Heart left ventricle (tissue), 16 donors: ENCODE measurements at regions of chr2 and their contacts with region 1.

Region 1: GRCh38 chr2:134261398-134262131 is 7.7 kb downstream of the MGAT5 start:
- DNase-seq: no peak
- ATAC-seq: peak in 3 of 4 donors; percentile 43 to 59 (median 52)
- H3K4me3 ChIP-seq: no peak overlapping the region
- H3K27ac ChIP-seq: peak overlapping the region; percentile 55 to 90 (median 80)
- H3K4me1 ChIP-seq: peaks cover 16 to 74% (median 61%) of the 10 kb centered on the region in 12 donors
- H3K27me3 ChIP-seq: no peaks in the 10 kb centered on the region
- CTCF ChIP-seq: no peak
- POLR2A ChIP-seq: no peak

Region 2: DNA sequence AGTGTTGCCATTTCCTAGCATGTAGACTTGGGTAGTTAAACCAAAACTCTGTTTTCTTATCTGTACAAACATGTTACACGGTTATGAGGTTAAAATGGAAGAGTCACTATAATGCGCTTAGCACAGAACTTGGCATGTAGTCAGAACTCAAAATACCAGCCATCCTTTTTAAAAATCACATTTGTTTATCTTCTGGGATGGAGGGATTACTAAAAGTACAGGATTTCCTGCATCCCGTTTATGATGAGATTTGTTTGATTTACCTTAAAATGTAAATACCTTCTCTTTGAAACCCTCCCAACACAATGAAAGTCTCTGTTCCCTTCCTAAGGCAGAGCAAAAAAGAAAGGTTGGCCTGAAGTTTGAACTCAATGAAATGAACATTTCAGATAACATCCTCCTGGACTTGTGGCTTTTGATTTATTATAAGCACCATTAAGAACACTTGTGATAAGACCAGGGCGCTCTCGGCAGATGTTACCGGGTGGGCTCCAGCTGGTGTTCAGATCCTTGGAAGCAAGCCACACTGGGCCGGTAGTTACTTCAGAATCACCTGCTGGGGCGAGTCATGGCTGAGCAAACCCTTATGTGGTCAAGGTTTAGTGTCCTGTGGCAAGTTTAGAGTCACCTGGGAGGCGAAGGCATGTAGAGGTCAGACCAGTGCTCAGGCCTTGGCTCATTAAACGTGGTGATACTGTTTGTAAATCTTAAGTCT is 98.0 kb after region 1 on chr2:
- intact Hi-C with region 1: loop called in 2 of 10 experiments (anchors 5 kb)
- DNase-seq: no peak
- ATAC-seq: peak in 3 of 4 donors; percentile 33 to 43 (median 40)
- H3K4me3 ChIP-seq: no peak overlapping the region
- H3K27ac ChIP-seq: peak overlapping the region in 8 of 12 donors; percentile 19 to 85 (median 70)
- H3K4me1 ChIP-seq: peaks cover 0 to 45% (median 34%) of the 10 kb centered on the region in 12 donors
- H3K27me3 ChIP-seq: no peaks in the 10 kb centered on the region
- CTCF ChIP-seq: no peak
- POLR2A ChIP-seq: no peak

Region 3: DNA sequence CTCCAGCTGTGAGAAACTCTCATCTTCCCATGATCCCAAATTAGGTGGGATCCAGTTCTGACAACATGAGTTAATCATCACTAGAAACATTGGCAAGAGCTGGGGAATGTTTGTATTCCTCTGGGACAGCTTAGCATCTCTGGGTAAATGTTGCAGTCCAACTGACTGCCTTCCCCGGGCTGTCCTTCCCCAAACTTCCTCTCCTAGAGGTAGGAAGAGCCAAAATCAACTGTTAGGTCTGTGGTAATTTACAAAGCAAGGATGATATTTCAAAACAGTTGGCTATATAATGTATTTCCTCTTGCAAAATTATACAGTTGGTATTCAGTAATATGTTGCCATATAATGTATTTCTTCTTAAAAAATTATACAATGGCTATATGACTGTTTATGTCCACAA is 140.8 kb after region 1 on chr2:
- intact Hi-C with region 1: loop called in 2 of 10 experiments (anchors 5 to 10 kb)
- DNase-seq: peak in 3 of 5 donors; percentile 51 to 59 (median 53)
- ATAC-seq: peak; percentile 70 to 80 (median 72)
- H3K4me3 ChIP-seq: no peak overlapping the region
- H3K27ac ChIP-seq: peak overlapping the region in 11 of 12 donors; percentile 50 to 83 (median 74)
- H3K4me1 ChIP-seq: peaks cover 7 to 58% (median 30%) of the 10 kb centered on the region in 12 donors
- H3K27me3 ChIP-seq: no peaks in the 10 kb centered on the region
- CTCF ChIP-seq: no peak
- POLR2A ChIP-seq: no peak

Region 4: GRCh38 chr2:134411828-134412638 is 150.5 kb after region 1 on chr2:
- intact Hi-C with region 1: loop called in 3 of 10 experiments (anchors 5 to 10 kb)
- DNase-seq: peak in 4 of 5 donors; percentile 77 to 82 (median 78)
- ATAC-seq: peak; percentile 92 to 95 (median 94)
- H3K4me3 ChIP-seq: no peak overlapping the region
- H3K27ac ChIP-seq: peak overlapping the region in 9 of 12 donors; percentile 12 to 64 (median 42)
- H3K4me1 ChIP-seq: peaks cover 0 to 50% (median 38%) of the 10 kb centered on the region in 12 donors
- H3K27me3 ChIP-seq: no peaks in the 10 kb centered on the region
- CTCF ChIP-seq: peak; percentile 48 to 82 (median 71)
- POLR2A ChIP-seq: no peak